ENCODE measurements at regions of chr7 and their contacts with region 1.

Region 1: DNA sequence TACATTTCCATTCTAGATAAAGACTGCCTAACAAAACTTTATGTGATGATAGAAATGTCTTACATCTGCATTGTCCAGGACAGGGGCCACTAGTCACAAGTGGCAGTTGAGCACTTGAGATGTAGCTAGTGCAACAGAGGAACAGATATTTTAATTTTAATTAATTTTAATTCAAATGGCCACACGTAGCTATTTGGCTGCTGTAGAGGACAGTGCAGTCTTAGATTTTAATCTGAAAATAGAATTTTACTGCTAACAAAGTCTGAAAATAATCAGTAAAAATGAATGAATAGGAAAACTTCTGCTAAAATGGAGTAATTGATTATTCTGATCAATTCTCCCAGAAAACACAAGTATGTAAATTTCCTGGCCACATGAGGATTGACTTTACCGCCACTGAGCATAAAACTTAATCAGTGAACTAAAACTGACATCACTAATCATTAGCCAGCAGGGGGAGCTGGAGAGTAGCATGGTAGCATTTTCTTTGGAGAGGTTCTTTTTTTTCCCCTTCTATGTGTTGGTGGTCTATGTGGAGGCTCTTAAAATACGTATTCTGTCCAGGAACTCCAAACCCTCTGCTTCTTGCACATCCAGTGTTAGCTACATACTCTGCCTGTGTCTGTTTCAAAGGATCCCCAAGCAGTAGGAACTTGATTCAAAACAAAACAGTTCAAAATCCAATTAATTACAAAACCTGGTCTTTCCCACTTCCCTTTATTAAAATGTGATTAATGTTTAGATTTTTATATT is 52.1 kb downstream of the TSPAN12 start:
- DNase-seq: peak; percentile 66
- H3K4me3 ChIP-seq: no peak overlapping the region
- H3K27ac ChIP-seq: no peak overlapping the region
- H3K4me1 ChIP-seq: no peaks in the 10 kb centered on the region
- H3K27me3 ChIP-seq: no peaks in the 10 kb centered on the region
- CTCF ChIP-seq: peak; percentile 76

Region 2: GRCh38 chr7:120857588-120858573 is 52.1 kb after region 1 on chr7 and contains the start of gene TSPAN12:
- intact Hi-C with region 1: loop called (anchors 5 kb)
- DNase-seq: peak; percentile 83
- H3K4me3 ChIP-seq: peak within 1 kb of the TSS; percentile 58
- H3K27ac ChIP-seq: peak within 1 kb of the TSS; percentile 88
- H3K4me1 ChIP-seq: peaks cover 4% of the 10 kb centered on the region
- H3K27me3 ChIP-seq: no peaks in the 10 kb centered on the region
- CTCF ChIP-seq: peak; percentile 65
- total RNA-seq, gene TSPAN12: 22.0 to 38.7 TPM

Region 3: DNA sequence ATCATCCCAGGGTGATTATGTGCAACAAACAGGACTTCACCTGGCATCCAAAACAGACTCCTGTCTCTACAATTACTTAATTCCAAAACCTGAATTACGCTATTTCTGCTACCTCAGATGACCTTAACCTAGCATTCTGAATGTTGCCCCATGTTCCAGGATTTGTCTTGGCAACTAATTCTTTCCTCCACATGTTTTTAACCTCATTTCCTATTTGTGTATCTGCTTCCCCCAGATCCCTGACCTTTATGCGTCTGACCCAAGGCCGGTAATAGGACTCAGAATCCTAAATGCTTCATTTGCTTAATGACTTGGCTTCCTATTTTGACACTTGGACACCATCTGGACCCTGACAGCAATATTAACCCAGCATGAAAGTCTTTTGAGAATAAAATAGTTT is 136.0 kb after region 1 on chr7:
- intact Hi-C with region 1: loop called (anchors 2 kb)
- DNase-seq: no peak
- H3K4me3 ChIP-seq: no peak overlapping the region
- H3K27ac ChIP-seq: no peak overlapping the region
- H3K4me1 ChIP-seq: no peaks in the 10 kb centered on the region
- H3K27me3 ChIP-seq: no peaks in the 10 kb centered on the region
- CTCF ChIP-seq: no peak

Region 4: GRCh38 chr7:121081327-121081936 is 275.6 kb after region 1 on chr7:
- intact Hi-C with region 1: loop called (anchors 10 kb)
- DNase-seq: no peak
- H3K4me3 ChIP-seq: no peak overlapping the region
- H3K27ac ChIP-seq: no peak overlapping the region
- H3K4me1 ChIP-seq: no peaks in the 10 kb centered on the region
- H3K27me3 ChIP-seq: no peaks in the 10 kb centered on the region
- CTCF ChIP-seq: peak; percentile 68

Measured in colonic mucosa (tissue), 4 donors.